CD4-positive, alpha-beta T cell (primary cell): ENCODE measurements at regions of chr1 and their contacts with region 1.

Region 1: DNA sequence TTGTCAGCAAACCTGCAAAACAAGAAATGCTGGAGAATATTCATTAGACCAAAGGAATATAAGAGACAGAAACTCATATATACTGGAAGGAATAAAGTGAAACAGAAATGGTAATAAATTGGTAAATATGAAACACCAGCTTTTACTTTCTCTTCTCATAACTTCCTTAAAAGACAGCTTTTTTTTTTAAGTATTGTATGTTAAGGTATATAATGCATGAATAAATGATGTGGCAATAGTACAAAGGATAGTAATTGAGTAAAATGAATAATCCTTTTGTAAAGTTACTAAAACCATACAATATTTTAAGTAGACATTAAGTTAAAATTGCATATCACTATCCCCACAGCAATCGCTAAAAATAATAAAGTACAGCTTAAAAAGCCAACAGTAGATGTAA is 64.8 kb downstream of the TRIM33 start:
- DNase-seq: peak in 1 of 14 experiments; percentile 0
- ATAC-seq: no peak
- H3K4me3 ChIP-seq: no peak overlapping the region
- H3K4me3 Mint-ChIP-seq: no peak overlapping the region
- H3K27ac ChIP-seq: no peak overlapping the region
- H3K27ac Mint-ChIP-seq: no peak overlapping the region
- H3K4me1 ChIP-seq: no peaks in the 10 kb centered on the region
- H3K4me1 Mint-ChIP-seq: peaks cover 3% of the 10 kb centered on the region
- H3K27me3 ChIP-seq: no peaks in the 10 kb centered on the region
- H3K27me3 Mint-ChIP-seq: no peaks in the 10 kb centered on the region
- CTCF ChIP-seq: no peak

Region 2: DNA sequence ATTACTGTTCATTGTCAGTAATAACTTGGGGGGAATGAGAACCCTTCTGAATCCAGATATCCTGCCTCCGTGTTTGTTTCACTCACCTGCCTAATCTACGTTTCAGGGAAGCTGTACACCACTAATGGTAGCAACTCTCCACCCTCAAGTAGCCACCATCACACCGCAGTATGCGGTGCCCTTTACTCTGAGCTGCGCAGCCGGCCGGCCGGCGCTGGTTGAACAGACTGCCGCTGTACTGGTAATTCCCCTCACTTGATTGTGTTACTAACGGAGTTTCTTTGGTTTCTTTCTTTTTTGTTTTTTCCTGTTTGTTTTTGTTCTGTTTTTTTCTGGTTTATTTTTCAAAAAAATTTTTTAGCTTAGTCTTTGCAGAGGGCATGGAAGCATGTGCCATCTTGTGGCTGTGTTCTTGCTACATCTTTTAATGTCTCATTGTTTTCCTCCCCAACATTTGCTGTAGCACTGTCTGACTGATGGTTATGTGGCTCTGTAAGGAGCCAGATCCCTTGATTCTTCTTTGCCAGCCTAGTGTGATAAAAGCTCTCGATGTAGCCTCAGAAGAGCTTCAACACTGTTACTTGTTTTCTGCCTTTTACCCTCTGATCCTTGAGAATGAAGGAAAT is 482.8 kb before region 1 on chr1:
- CTCF ChIA-PET with region 1: no interaction called
- POLR2A ChIA-PET with region 1: no interaction called
- intact Hi-C with region 1: no loop called
- DNase-seq: peak in 2 of 14 experiments; percentile 36 to 39
- ATAC-seq: peak; percentile 56
- H3K4me3 ChIP-seq: no peak overlapping the region
- H3K4me3 Mint-ChIP-seq: no peak overlapping the region
- H3K27ac ChIP-seq: no peak overlapping the region
- H3K27ac Mint-ChIP-seq: peak overlapping the region; percentile 65
- H3K4me1 ChIP-seq: no peaks in the 10 kb centered on the region
- H3K4me1 Mint-ChIP-seq: peaks cover 26% of the 10 kb centered on the region
- H3K27me3 ChIP-seq: no peaks in the 10 kb centered on the region
- H3K27me3 Mint-ChIP-seq: no peaks in the 10 kb centered on the region
- CTCF ChIP-seq: no peak

Region 3: GRCh38 chr1:114389714-114390113 is 56.5 kb before region 1 on chr1:
- CTCF ChIA-PET with region 1: no interaction called
- POLR2A ChIA-PET with region 1: no interaction called
- intact Hi-C with region 1: loop called in 1 of 2 experiments (anchors 10 kb)
- DNase-seq: no peak
- ATAC-seq: no peak
- H3K4me3 ChIP-seq: no peak overlapping the region
- H3K4me3 Mint-ChIP-seq: no peak overlapping the region
- H3K27ac ChIP-seq: no peak overlapping the region
- H3K27ac Mint-ChIP-seq: no peak overlapping the region
- H3K4me1 ChIP-seq: no peaks in the 10 kb centered on the region
- H3K4me1 Mint-ChIP-seq: no peaks in the 10 kb centered on the region
- H3K27me3 ChIP-seq: no peaks in the 10 kb centered on the region
- H3K27me3 Mint-ChIP-seq: no peaks in the 10 kb centered on the region
- CTCF ChIP-seq: no peak